Mammary epithelial cell (primary cell): ENCODE measurements at regions of chr2 and their contacts with region 1.

Region 1: GRCh38 chr2:203238704-203239526 is at the start of gene CYP20A1:
- DNase-seq: peak; percentile 97
- H3K4me3 ChIP-seq: peak within 1 kb of the TSS; percentile 68 to 93 (median 81)
- H3K27ac ChIP-seq: peak within 1 kb of the TSS; percentile 88
- H3K4me1 ChIP-seq: peaks cover 3% of the 10 kb centered on the region
- H3K27me3 ChIP-seq: no peaks in the 10 kb centered on the region
- CTCF ChIP-seq: peak in 1 of 2 donors; percentile 46
- total RNA-seq, gene CYP20A1: 17.6 to 25.0 TPM

Region 2: GRCh38 chr2:202577250-202578183 is 661.4 kb before region 1 on chr2:
- CTCF ChIA-PET with region 1: no interaction called
- dilution Hi-C with region 1: no loop called
- in situ Hi-C with region 1: no loop called
- intact Hi-C with region 1: loop called (anchors 10 kb)
- DNase-seq: no peak
- H3K4me3 ChIP-seq: no peak overlapping the region
- H3K27ac ChIP-seq: no peak overlapping the region
- H3K4me1 ChIP-seq: no peaks in the 10 kb centered on the region
- H3K27me3 ChIP-seq: no peaks in the 10 kb centered on the region
- CTCF ChIP-seq: no peak

Region 3: DNA sequence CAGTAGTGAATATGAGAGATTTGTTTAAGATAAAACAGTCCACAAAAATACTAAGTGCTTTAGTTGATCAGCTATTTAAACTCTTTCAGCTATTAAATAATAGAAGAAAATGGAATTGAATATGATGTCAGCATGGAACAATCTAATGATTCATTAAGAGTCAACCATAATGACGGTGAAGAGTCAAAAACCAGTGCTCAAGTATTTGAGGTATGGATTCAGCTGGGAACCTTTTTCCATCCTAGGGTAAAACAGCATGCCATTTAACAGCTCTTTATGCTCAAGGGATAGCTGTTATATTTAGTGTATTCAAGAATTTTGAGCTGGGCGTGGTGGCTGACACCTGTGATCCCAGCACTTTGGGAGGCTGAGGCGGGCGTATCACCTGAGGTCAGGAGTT is 297.1 kb before region 1 on chr2:
- CTCF ChIA-PET with region 1: no interaction called
- dilution Hi-C with region 1: no loop called
- in situ Hi-C with region 1: no loop called
- intact Hi-C with region 1: no loop called
- DNase-seq: no peak
- H3K4me3 ChIP-seq: no peak overlapping the region
- H3K27ac ChIP-seq: no peak overlapping the region
- H3K4me1 ChIP-seq: no peaks in the 10 kb centered on the region
- H3K27me3 ChIP-seq: no peaks in the 10 kb centered on the region
- CTCF ChIP-seq: no peak

Region 4: DNA sequence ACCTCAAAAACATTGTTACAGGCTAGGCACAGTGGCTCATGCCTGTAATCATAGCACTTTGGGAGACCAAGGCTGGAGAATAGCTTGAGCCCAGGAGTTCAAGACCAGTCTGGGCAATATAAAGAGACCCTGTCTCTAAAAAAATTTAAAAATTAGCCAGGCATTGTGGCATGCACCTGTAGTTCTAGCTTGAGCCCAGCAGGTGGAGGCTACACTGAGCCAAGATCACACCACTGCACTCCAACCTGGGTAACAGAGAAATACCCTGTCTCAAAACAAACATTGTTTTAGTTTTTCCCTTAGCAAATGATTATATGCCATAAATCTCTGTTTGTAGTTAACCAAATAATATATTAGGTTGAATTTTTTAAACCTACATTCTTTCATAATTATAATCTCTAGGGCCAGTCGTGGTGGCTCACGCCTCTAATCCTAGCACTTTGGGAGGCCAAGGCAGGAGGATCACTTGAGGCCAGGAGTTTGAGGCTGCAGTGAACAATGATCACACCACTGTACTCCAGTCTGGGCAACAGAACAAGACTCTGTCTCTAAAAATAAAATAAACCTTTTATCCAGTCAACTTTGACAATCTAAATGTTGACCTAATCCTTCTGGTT is 13.4 kb before region 1 on chr2:
- CTCF ChIA-PET with region 1: no interaction called
- dilution Hi-C with region 1: no loop called
- in situ Hi-C with region 1: no loop called
- intact Hi-C with region 1: no loop called
- DNase-seq: peak; percentile 5
- H3K4me3 ChIP-seq: no peak overlapping the region
- H3K27ac ChIP-seq: no peak overlapping the region
- H3K4me1 ChIP-seq: no peaks in the 10 kb centered on the region
- H3K27me3 ChIP-seq: no peaks in the 10 kb centered on the region
- CTCF ChIP-seq: peak; percentile 62 to 72

Region 5: DNA sequence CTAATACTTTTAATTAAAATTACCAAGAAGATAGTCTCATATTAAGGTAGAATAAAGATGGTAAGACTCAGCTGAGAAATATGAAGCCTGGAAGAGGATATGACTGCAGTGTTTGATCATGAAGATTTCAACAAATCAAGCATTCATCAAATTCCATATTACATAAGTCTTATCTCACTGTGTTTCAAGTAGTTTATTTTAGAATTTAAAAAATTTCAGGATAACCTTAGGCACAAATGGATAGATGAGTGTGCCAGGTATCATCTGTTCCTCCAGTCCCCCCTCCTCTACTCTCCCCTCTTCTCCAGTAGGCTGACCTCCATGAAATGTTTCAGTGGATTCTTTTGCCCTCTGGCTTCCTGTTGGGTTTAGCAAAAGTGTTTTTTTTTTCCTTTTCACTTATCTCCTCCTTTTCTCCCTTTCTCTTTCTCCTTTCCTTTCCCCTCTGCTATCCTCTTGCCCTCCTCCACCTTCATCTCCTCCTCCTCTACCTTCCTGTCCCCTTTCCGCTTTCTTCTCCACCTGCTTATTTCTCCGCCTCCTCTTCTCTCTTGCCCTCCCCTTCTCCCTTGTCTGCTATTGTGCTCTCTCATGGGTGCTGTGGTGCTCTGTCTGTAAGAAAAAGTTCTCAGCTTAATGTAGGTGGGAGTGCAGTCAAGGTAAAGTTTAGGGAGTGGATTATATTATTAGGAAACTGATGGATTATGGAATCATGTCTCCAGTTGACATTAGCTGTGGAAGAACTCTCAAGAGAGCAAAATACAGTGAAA is 162.1 kb after region 1 on chr2:
- CTCF ChIA-PET with region 1: no interaction called
- dilution Hi-C with region 1: no loop called
- in situ Hi-C with region 1: no loop called
- intact Hi-C with region 1: loop called (anchors 5 kb)
- DNase-seq: no peak
- H3K4me3 ChIP-seq: no peak overlapping the region
- H3K27ac ChIP-seq: no peak overlapping the region
- H3K4me1 ChIP-seq: peaks cover 29% of the 10 kb centered on the region
- H3K27me3 ChIP-seq: no peaks in the 10 kb centered on the region
- CTCF ChIP-seq: no peak

Region 6: GRCh38 chr2:203418271-203418670 is 179.4 kb after region 1 on chr2:
- CTCF ChIA-PET with region 1: no interaction called
- dilution Hi-C with region 1: no loop called
- in situ Hi-C with region 1: no loop called
- intact Hi-C with region 1: no loop called
- DNase-seq: no peak
- H3K4me3 ChIP-seq: no peak overlapping the region
- H3K27ac ChIP-seq: no peak overlapping the region
- H3K4me1 ChIP-seq: no peaks in the 10 kb centered on the region
- H3K27me3 ChIP-seq: no peaks in the 10 kb centered on the region
- CTCF ChIP-seq: no peak